CD4-positive, alpha-beta memory T cell (primary cell): ENCODE measurements at regions of chr22 and their contacts with region 1.

Region 1: DNA sequence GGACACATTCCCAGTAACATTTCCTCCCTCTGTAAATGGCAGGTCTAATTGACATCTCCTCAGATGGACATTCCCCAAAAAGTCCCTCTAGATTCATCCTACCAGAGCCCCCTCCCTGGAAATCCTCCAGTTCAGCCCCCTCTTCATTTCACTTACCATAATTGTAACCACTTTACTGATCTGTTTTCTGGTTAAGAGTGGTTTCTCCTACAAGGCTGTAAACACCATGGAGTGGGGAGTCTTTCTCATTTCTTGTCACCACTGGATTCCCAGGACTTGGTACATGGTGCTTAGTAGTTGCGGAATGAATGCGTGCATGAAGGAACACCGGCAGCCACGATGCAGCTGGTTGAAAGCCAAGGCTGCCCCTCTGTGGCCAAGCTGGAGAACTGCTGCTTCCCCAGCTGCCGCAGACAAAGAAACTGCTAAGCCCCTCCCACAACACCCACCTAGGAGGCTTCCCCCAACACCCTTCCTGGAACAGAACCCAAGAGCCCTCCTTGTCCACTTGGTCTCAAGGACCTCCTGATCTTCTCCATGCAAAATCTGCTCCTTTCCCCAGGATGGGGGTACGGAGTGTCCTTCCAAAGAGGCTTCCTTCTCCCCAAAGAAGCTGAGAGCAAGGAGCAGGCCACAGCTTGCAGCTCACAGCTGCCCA is 18.6 kb upstream of the SCARF2 start:
- DNase-seq: peak; percentile 72 to 79 (median 74)
- H3K4me3 ChIP-seq: no peak overlapping the region
- H3K4me3 Mint-ChIP-seq: peak overlapping the region in 3 of 8 donors; percentile 9 to 20 (median 15)
- H3K27ac ChIP-seq: no peak overlapping the region
- H3K27ac Mint-ChIP-seq: peak overlapping the region in 6 of 7 donors; percentile 2 to 75 (median 54)
- H3K4me1 ChIP-seq: peaks cover 25% of the 10 kb centered on the region
- H3K4me1 Mint-ChIP-seq: peaks cover 18 to 49% (median 25%) of the 10 kb centered on the region in 4 donors
- H3K27me3 ChIP-seq: no peaks in the 10 kb centered on the region
- H3K27me3 Mint-ChIP-seq: no peaks in the 10 kb centered on the region

Region 2: DNA sequence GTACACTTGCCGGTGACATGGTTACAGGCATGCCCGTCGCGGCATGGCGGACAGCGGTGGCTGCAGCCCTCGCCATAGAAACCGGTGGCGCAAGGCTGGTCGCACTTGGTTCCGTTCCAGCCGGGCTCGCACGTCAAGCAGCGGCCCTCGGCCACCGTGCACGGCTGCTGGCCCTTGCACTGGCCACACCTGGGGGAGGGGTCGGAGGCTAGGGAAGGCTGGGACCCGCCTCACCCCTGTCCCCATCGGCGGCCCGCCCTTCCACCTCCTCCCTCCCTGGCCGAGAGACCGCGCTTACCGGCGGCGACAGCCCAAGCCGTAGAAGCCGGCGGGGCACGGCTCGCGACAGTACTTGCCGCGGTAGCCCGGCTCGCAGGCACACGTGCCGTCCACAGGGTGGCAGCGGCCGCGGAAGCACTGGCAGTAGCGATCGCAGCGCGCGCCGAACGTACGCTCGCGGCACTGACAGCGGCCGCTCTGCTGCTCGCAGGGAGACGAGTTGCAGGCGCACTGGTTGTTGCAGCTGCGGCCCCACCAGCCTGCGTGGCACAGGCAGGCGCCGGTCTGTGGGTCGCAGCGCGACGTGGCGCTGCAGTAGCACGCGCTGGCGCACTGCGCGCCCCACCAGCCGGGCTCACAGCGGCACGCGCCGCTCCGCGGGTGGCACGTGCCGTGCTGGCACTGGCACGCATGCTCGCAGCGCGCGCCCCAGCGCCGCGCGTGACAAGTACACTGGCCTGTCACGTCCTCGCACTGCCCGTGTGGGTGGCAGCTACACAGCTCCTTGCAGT is 25.3 kb before region 1 on chr22:
- CTCF ChIA-PET with region 1: interaction called, 12 read pairs
- POLR2A ChIA-PET with region 1: interaction called, 8 read pairs
- intact Hi-C with region 1: loop called (anchors 1 kb)
- DNase-seq: peak; percentile 61 to 72 (median 68)
- H3K4me3 ChIP-seq: peak overlapping the region in 1 of 2 donors; percentile 65
- H3K4me3 Mint-ChIP-seq: peak overlapping the region; percentile 67 to 91 (median 88)
- H3K27ac ChIP-seq: no peak overlapping the region
- H3K27ac Mint-ChIP-seq: no peak overlapping the region
- H3K4me1 ChIP-seq: peaks cover 37% of the 10 kb centered on the region
- H3K4me1 Mint-ChIP-seq: peaks cover 10 to 49% (median 18%) of the 10 kb centered on the region in 4 donors
- H3K27me3 ChIP-seq: peaks cover 19% of the 10 kb centered on the region
- H3K27me3 Mint-ChIP-seq: peaks cover 20% of the 10 kb centered on the region in 2 donors

Region 3: GRCh38 chr22:20490183-20490940 is 34.2 kb after region 1 on chr22:
- CTCF ChIA-PET with region 1: interaction called, 10 read pairs
- POLR2A ChIA-PET with region 1: no interaction called
- intact Hi-C with region 1: no loop called
- DNase-seq: peak in 1 of 5 donors; percentile 9
- H3K4me3 ChIP-seq: no peak overlapping the region
- H3K4me3 Mint-ChIP-seq: peak overlapping the region in 5 of 8 donors; percentile 1 to 62 (median 19)
- H3K27ac ChIP-seq: no peak overlapping the region
- H3K27ac Mint-ChIP-seq: peak overlapping the region; percentile 25 to 71 (median 58)
- H3K4me1 ChIP-seq: peaks cover 61% of the 10 kb centered on the region
- H3K4me1 Mint-ChIP-seq: peaks cover 42 to 78% (median 65%) of the 10 kb centered on the region in 4 donors
- H3K27me3 ChIP-seq: no peaks in the 10 kb centered on the region
- H3K27me3 Mint-ChIP-seq: no peaks in the 10 kb centered on the region